ENCODE measurements at regions of chr9 and their contacts with region 1.

Region 1: GRCh38 chr9:129610473-129611301 is 10.2 kb downstream of the C9orf50 start:
- DNase-seq: peak; percentile 90
- H3K4me3 ChIP-seq: peak overlapping the region; percentile 45 to 75 (median 68)
- H3K27ac ChIP-seq: peak overlapping the region; percentile 88 to 92 (median 90)
- H3K4me1 ChIP-seq: peaks cover 0 to 48% (median 35%) of the 10 kb centered on the region in 4 donors
- H3K27me3 ChIP-seq: no peaks in the 10 kb centered on the region
- CTCF ChIP-seq: peak; percentile 73 to 85 (median 82)
- EP300 ChIP-seq: no peak
- POLR2A ChIP-seq: no peak

Region 2: GRCh38 chr9:129139993-129140396 is 470.7 kb before region 1 on chr9:
- intact Hi-C with region 1: loop called (anchors 1 kb)
- DNase-seq: peak; percentile 98
- H3K4me3 ChIP-seq: peak overlapping the region; percentile 36 to 59 (median 50)
- H3K27ac ChIP-seq: peak overlapping the region; percentile 97 to 100 (median 99)
- H3K4me1 ChIP-seq: peaks cover 0 to 73% (median 64%) of the 10 kb centered on the region in 4 donors
- H3K27me3 ChIP-seq: no peaks in the 10 kb centered on the region
- CTCF ChIP-seq: no peak
- EP300 ChIP-seq: peak in 2 of 4 donors; percentile 71 to 76
- POLR2A ChIP-seq: peak; percentile 55 to 62

Region 3: GRCh38 chr9:129177791-129178559 is 432.7 kb before region 1 on chr9 and contains the start of gene IER5L:
- intact Hi-C with region 1: loop called (anchors 1 kb)
- DNase-seq: peak; percentile 99
- H3K4me3 ChIP-seq: peak within 1 kb of the TSS; percentile 80 to 96 (median 93)
- H3K27ac ChIP-seq: peak within 1 kb of the TSS; percentile 97 to 99 (median 98)
- H3K4me1 ChIP-seq: peaks cover 0 to 34% (median 23%) of the 10 kb centered on the region in 4 donors
- H3K27me3 ChIP-seq: no peaks in the 10 kb centered on the region
- CTCF ChIP-seq: no peak
- EP300 ChIP-seq: no peak
- POLR2A ChIP-seq: peak; percentile 88 to 95
- total RNA-seq, gene IER5L: 4.4 to 17.4 (median 10.2) TPM

Region 4: DNA sequence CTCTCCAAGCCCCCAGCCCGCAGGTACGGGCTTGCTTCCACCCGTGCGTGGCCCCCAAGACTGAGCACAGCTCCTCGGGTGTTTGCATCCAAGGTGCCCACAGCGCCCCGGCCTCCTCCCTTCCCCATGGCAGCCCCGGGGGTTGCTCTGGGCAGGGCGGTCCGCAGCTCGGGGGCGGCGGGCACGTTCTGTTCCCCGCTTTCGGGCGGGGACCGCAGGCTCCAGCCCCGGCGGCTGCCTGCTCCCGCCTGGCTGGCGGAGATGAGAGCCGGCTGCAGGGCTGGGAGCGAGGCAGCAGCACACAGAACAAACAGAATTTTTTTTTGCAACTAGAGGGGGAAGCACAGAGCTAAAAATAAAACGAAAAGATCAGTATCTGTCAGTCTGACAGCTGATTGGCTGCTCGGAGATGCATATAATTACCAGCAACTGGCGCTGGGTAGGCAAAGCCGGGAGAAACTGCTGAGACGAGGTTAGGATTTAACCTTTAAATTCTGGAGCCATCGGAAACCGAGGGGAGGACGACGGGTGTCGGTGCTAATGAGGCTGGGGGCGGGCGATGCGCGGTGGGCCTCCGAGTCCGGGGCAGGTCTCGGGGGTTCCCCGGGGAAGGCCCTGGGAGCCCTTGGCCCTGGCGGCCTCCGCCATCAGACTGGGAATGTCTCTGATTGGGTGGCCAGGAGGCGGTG is 290.0 kb before region 1 on chr9:
- intact Hi-C with region 1: loop called (anchors 5 kb)
- DNase-seq: peak; percentile 80
- H3K4me3 ChIP-seq: peak overlapping the region in 3 of 4 donors; percentile 32 to 51 (median 49)
- H3K27ac ChIP-seq: peak overlapping the region; percentile 75 to 87 (median 82)
- H3K4me1 ChIP-seq: peaks cover 0 to 49% (median 43%) of the 10 kb centered on the region in 4 donors
- H3K27me3 ChIP-seq: no peaks in the 10 kb centered on the region
- CTCF ChIP-seq: peak in 3 of 4 experiments; percentile 13 to 27 (median 23)
- EP300 ChIP-seq: no peak
- POLR2A ChIP-seq: peak in 1 of 2 donors; percentile 32

Region 5: DNA sequence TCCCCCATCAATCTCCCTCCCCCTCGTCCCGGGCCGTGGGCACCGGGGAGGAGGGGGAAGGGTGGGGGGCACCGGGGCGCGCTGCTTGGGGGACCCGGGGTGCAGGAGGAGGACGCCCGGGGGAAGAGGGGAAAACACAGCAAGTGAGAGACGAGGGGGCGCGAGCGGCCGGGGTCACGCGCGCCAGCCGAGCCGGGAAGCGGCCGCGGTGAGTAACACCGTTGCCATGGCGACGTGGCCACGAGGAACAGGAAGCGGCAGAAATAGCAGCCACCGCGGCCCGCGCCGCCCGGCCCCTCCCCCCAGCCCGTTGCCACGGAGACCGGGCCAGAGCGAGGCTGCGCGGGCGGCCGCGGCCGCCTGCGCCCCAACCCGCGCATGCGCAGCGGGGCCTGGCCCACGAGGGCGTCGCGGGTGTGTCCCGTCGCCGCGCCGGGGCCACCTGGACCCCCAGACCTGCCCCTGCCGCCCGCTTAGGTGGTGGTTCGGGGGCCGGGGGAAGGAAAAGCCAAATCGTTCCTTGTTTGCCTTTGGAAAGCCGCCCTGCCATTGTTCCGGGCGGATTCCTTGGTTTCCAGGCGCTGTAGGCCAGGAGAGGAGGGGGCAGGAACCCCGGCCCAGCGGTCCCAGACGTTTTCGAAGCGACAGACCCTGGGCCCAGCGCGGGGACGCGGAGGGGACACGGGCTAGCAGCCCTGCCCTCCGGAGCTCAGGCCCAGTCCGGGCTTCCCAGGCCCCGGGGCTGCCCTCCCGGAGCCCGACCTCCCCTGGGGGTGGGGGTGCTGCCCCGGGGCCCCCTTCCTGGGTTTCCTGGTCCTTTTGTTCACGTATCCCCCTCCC is 196.9 kb before region 1 on chr9:
- intact Hi-C with region 1: loop called (anchors 5 kb)
- DNase-seq: peak; percentile 99
- H3K4me3 ChIP-seq: peak overlapping the region; percentile 49 to 63 (median 57)
- H3K27ac ChIP-seq: peak overlapping the region; percentile 94 to 100 (median 98)
- H3K4me1 ChIP-seq: peaks cover 0 to 38% (median 32%) of the 10 kb centered on the region in 4 donors
- H3K27me3 ChIP-seq: no peaks in the 10 kb centered on the region
- CTCF ChIP-seq: no peak
- EP300 ChIP-seq: peak in 2 of 4 donors; percentile 41 to 91
- POLR2A ChIP-seq: peak; percentile 74 to 81

Region 6: DNA sequence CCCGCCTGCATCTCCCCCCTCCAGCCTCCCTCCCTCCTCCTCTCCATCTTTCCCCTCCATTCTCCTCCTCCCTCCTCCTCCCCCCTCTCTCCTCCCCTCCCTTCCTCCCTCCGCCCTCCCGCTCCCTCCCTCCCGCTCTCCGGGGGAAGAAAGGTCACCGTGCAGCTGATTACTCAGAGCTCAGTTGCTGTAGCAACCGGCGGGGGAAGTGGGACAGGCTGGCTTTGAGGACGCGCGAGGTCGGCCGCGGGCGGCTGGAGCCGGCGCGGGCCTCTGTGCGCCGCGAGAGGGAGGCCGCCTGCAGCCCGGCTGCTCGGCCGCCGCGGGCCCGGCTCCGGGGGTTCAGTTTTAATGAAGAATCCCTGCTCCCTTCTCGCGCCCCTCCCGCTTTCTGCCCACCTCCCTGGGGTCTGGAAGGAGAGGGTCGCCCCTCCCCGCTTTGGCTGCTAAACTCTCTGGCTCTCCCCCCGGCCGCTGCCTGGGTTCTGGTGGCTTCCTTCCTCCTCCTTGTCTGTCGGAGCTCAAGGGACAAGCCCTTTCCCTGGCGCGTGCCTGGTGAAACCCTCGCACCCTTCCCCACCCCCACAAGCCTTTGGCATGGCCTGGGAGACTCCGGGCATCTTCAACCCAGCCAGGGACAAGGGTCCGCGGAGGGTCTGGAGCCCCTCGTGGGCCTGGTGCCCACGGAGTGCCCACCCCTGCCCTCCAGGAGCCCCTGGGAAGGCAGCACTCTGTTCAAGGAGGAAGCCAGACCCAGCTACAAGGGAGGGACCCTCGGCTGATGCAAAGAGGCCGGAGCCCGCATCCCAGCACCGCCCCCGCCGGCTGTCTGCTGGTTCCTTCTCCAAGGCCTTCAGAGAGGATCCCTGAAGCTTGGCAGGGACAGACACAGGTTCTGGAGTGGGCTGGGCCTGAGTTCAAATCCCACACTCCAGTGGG is 150.1 kb before region 1 on chr9:
- intact Hi-C with region 1: loop called (anchors 1 kb)
- DNase-seq: peak; percentile 99
- H3K4me3 ChIP-seq: peak overlapping the region; percentile 19 to 46 (median 46)
- H3K27ac ChIP-seq: peak overlapping the region; percentile 95 to 100 (median 98)
- H3K4me1 ChIP-seq: peaks cover 0 to 68% (median 54%) of the 10 kb centered on the region in 4 donors
- H3K27me3 ChIP-seq: no peaks in the 10 kb centered on the region
- CTCF ChIP-seq: peak in 1 of 4 experiments; percentile 23
- EP300 ChIP-seq: peak in 2 of 4 donors; percentile 53 to 72
- POLR2A ChIP-seq: peak in 1 of 2 donors; percentile 42

Region 7: GRCh38 chr9:129569502-129570449 is 40.9 kb before region 1 on chr9:
- intact Hi-C with region 1: loop called (anchors 5 kb)
- DNase-seq: no peak
- H3K4me3 ChIP-seq: peak overlapping the region in 3 of 4 donors; percentile 58 to 74 (median 68)
- H3K27ac ChIP-seq: peak overlapping the region; percentile 76 to 87 (median 81)
- H3K4me1 ChIP-seq: peaks cover 0 to 40% (median 35%) of the 10 kb centered on the region in 4 donors
- H3K27me3 ChIP-seq: no peaks in the 10 kb centered on the region
- CTCF ChIP-seq: peak in 3 of 4 experiments; percentile 22 to 41 (median 28)
- EP300 ChIP-seq: no peak
- POLR2A ChIP-seq: no peak

Measured in sigmoid colon (tissue), 7 donors.